ENCODE measurements at regions of chr2 and their contacts with region 1.

Region 1: GRCh38 chr2:196798980-196799379 is 503 bp downstream of the GTF3C3 start:
- DNase-seq: peak; percentile 61
- H3K4me3 Mint-ChIP-seq: peak overlapping the region; percentile 90
- H3K27ac Mint-ChIP-seq: peak overlapping the region; percentile 96
- H3K4me1 Mint-ChIP-seq: peaks cover 27% of the 10 kb centered on the region
- H3K27me3 Mint-ChIP-seq: no peaks in the 10 kb centered on the region

Region 2: DNA sequence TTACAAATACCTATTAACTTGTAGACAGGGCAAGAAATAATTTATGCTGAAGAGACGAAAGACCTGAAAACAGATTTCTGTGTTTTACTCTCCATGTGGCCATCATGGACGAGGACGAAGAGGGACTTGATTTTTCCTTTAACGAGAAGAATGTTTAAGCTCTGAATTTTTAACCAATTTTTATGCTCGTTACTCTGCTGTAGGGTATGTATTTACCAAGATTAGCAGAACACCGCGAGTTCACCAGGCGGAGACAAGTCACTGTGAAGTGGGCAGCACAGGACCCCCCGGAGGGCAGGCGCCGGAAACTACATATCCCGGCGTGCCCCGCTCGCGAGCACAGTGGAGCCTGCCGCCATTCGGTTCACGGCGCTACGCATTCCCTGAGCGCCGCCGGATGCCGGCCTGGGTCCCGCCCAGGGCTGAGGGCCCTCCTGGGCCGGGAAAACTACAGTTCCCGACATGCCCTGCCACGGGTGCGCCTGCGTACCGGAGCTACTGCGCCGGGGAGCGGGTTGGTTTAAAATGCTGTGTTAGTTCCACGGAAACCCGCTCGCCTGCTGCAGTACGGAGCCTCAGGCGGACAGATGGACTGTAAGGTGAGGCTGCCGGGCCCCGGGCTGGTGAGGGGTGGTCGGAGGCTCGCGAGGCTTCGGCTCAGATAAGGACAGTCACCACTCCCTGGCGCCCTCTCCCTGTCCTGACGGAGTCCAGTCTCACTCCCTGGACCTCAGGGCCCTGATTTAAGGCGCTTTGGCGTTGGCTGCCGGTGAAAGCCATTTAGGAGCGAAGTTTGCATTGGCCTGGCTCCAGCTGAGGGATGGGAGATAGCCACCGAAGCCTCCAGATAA is 159.6 kb before region 1 on chr2 and contains the start of gene CCDC150:
- intact Hi-C with region 1: loop called (anchors 1 kb)
- DNase-seq: peak; percentile 99
- H3K4me3 Mint-ChIP-seq: peak within 1 kb of the TSS; percentile 96
- H3K27ac Mint-ChIP-seq: peak within 1 kb of the TSS; percentile 85
- H3K4me1 Mint-ChIP-seq: peaks cover 21% of the 10 kb centered on the region
- H3K27me3 Mint-ChIP-seq: peaks cover 12% of the 10 kb centered on the region
- total RNA-seq, gene CCDC150: 18.2 and 21.1 TPM in 2 replicates

Region 3: GRCh38 chr2:196961889-196962288 is 162.9 kb after region 1 on chr2:
- intact Hi-C with region 1: loop called (anchors 1 kb)
- DNase-seq: peak; percentile 70
- H3K4me3 Mint-ChIP-seq: peak overlapping the region; percentile 65
- H3K27ac Mint-ChIP-seq: peak overlapping the region; percentile 83
- H3K4me1 Mint-ChIP-seq: peaks cover 24% of the 10 kb centered on the region
- H3K27me3 Mint-ChIP-seq: no peaks in the 10 kb centered on the region